AG04450 (cell line): ENCODE measurements at regions of chr15 and their contacts with region 1.

Region 1: DNA sequence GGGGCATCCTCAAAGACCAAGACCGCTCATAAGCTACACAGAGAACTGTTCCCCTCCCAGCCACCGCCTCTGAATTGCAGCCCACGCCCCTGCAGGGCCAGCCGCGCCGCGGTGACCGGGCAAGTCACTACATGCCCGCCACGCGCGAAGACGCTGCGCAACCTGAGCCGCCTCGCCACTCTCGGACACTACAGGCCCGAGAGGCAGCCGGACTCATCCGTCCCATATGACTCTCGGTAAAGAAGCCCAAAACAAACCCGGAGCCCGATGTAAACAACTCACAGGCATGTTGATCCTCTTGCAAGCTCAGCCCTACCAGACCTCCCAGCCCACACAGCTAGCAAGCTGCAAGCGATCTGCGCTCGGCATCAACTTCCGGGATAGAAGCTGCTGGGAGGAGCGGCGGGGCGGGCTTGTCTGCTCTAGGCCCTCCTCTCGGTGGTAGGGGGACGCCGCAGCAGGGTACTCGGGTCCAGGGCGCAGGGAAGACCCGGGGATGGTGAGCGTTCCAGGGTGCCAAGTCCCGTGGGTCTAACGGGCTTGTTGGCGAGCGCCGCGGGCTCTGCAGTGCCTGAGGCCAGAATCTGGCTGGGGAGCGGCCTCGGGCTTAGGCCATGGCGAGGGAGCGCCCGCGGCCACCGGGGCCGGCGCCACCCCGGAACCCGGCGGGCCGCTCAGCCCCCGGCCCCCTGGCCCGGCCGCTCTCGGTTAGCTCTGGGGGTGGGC is at the start of gene RPS27L:
- DNase-seq: peak; percentile 94
- H3K4me3 ChIP-seq: peak within 1 kb of the TSS; percentile 88
- H3K27ac ChIP-seq: peak within 1 kb of the TSS; percentile 98
- H3K27me3 ChIP-seq: no peaks in the 10 kb centered on the region
- CTCF ChIP-seq: no peak
- polyA plus RNA-seq, gene RPS27L: 501 and 610 TPM in 2 replicates

Region 2: DNA sequence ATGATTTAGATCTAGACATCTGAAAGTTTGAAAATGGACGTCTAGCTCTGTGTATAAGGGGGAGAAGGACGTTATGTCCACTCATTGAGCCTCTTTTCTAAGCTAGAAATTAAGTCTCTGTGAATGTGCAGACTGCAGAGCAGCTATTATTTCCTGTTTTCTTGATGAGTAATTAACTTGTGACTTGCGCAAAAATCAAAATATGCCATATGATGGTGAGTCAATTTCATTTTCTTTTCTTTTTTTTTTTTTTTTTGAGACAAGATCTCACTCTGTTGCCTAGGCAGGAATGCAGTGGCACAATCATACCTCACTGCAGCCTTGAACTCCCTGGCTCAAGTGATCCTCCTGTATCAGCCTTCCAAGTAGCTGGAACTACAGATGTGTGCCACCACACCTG is 21.5 kb before region 1 on chr15:
- CTCF ChIA-PET with region 1: no interaction called
- POLR2A ChIA-PET with region 1: interaction called, 17 read pairs
- DNase-seq: peak; percentile 54
- H3K4me3 ChIP-seq: no peak overlapping the region
- H3K27ac ChIP-seq: peak overlapping the region; percentile 79
- H3K27me3 ChIP-seq: no peaks in the 10 kb centered on the region
- CTCF ChIP-seq: no peak

Region 3: DNA sequence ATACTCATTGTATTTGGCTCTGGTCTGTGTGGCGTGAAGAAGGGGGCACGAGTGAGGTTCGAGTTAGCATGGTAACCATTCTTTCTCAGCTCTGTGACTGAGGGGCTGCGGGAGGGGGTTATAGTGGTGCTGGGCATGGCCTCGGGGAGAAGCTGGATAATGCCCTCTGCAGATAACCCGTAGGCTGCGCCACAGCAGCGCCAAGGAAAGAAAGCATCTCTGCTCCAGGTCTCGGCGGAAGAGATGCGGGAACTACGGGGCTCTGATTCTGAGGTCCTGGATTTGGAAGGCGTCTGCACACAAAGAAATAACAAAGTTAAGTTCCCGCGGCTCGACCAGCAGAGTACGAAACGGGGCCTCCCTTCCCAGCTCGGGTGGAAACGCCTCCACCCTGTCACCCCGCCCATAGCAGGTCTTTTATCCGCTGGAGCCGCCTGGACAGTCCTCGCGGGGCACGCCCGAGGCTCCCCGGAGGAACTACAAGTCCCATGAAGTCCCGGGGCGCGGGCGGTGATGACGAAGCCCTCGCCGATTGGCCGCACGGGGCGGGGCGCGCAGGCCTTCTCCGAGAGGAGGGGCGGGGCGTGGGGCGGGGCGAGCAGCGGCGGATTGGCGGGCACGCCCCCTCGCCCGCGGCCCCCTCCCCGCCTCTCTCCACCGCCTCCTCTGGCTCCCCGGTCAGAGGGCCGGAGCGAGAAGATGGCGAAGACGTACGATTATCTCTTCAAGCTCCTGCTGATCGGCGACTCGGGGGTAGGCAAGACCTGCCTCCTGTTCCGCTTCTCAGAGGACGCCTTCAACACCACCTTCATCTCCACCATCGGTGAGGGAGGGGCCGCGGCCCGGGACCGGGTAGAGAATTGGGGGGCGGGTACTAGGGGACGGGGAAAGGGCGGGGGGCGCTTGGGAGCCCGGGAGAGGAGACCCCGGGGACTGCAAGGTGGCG is 31.9 kb after region 1 on chr15 and contains the start of gene RAB8B:
- CTCF ChIA-PET with region 1: interaction called, 8 read pairs
- POLR2A ChIA-PET with region 1: interaction called, 15 read pairs
- DNase-seq: peak; percentile 90
- H3K4me3 ChIP-seq: peak within 1 kb of the TSS; percentile 86
- H3K27ac ChIP-seq: peak within 1 kb of the TSS; percentile 57
- H3K27me3 ChIP-seq: no peaks in the 10 kb centered on the region
- CTCF ChIP-seq: no peak
- polyA plus RNA-seq, gene RAB8B: 71.7 and 82.4 TPM in 2 replicates

Region 4: GRCh38 chr15:63233667-63234423 is 76.6 kb after region 1 on chr15:
- CTCF ChIA-PET with region 1: no interaction called
- POLR2A ChIA-PET with region 1: interaction called, 11 read pairs
- DNase-seq: no peak
- H3K4me3 ChIP-seq: peak overlapping the region; percentile 3; the same call in 1 of the 2 replicates
- H3K27ac ChIP-seq: peak overlapping the region; percentile 91
- H3K27me3 ChIP-seq: no peaks in the 10 kb centered on the region
- CTCF ChIP-seq: no peak

Region 5: GRCh38 chr15:63277038-63277892 is 120.0 kb after region 1 on chr15 and contains the start of gene APH1B:
- CTCF ChIA-PET with region 1: no interaction called
- POLR2A ChIA-PET with region 1: interaction called, 11 read pairs
- DNase-seq: no peak
- H3K4me3 ChIP-seq: peak within 1 kb of the TSS; percentile 75
- H3K27ac ChIP-seq: peak within 1 kb of the TSS; percentile 52
- H3K27me3 ChIP-seq: no peaks in the 10 kb centered on the region
- CTCF ChIP-seq: peak; percentile 12; the same call in 1 of the 2 replicates
- polyA plus RNA-seq, gene APH1B: 13.6 and 17.9 TPM in 2 replicates